ENCODE measurements at regions of chr14 and their contacts with region 1.

Region 1: DNA sequence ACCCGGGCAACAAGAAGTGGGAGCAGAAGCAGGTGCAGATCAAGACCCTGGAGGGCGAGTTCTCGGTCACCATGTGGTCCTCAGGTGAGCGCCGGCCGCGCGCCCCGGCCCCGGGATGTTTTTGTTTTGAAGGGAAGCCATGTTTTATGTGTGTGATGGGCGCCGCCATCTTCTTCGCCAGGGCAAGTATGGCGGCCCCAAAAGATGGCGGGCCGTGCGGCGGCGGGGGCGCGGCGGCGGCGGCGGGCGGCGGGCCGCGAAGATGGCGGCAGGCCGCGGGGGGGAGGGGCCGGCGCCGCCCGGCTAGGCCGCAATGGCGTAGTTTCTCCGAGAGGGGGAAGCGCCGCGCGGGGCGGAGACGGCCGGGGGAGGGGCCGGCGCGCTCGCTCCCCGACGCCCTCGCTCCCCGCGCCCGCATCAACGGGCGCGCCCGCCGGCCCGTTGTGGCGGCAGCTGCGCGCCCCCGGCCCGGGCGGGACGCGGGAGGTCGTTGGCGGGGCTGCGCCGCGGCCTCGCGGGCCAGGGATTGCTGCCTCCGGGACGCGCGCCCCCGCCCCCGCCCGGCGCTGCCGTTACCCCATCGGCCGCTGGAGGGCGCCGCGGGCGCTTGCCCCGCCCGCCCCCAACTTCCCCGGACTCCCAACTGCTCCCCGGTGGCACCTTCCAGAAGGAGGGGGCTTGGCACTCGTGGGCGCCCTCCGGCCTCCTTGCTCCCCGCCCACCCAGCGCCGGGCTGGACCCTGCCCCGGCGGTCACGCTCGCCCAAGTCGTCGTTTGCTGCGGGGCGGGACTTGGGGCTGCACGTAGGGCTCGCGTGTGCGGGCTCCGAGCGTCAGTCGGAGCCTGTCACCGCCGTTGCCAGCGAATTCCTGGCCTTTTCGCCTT is 1.1 kb downstream of the YY1 start:
- DNase-seq: peak; percentile 86
- ATAC-seq: peak; percentile 48
- H3K4me3 Mint-ChIP-seq: peak overlapping the region; percentile 87
- H3K27ac Mint-ChIP-seq: peak overlapping the region; percentile 90
- H3K4me1 Mint-ChIP-seq: peaks cover 61% of the 10 kb centered on the region
- H3K27me3 Mint-ChIP-seq: no peaks in the 10 kb centered on the region
- CTCF ChIP-seq: no peak

Region 2: DNA sequence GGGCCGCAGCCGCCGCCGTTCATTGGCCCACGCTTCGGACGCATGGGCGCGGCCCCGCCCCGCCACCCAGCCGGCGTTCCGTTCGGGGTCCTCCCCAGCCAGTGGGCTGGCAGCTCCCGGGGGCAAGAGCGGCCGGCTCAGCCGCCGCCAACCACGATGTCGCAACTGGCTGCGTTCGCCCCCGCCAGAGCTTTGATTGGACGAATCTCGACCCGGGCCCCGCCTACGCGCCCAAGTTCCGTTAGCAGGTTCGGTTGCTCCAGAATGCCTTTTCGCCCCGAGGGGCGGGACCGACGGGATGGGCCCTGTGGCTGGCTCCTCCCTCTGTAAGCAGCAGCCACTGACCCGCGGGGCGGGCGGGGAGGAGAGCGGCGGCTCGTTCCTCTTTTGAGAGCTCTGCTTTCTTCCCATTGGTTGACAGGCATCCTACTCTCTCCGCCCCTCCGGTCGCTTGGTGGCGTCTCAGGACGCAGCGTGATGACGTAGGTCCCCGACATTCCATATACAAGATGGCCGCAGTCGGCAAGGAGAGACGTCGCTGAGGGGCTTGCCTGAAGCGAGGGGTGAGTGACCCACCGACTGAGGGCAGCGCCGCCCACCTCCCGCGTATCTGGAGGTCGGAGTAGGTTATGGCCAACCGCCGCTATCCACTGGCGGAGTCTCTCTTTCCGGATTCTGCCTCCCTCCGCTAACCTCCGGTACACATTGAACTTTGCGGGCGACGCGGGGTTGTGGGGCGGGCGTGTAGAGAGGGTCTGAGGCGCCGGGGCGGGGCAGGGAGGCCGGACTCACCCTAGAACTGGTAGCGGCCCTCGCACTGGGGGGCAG is 759.0 kb before region 1 on chr14 and contains the start of gene CCNK:
- CTCF ChIA-PET with region 1: no interaction called
- POLR2A ChIA-PET with region 1: no interaction called
- intact Hi-C with region 1: loop called (anchors 2 kb)
- DNase-seq: peak; percentile 99
- ATAC-seq: peak; percentile 87
- H3K4me3 Mint-ChIP-seq: peak within 1 kb of the TSS; percentile 97
- H3K27ac Mint-ChIP-seq: peak within 1 kb of the TSS; percentile 96
- H3K4me1 Mint-ChIP-seq: peaks cover 59% of the 10 kb centered on the region
- H3K27me3 Mint-ChIP-seq: no peaks in the 10 kb centered on the region
- CTCF ChIP-seq: no peak
- total RNA-seq, gene CCNK: 76.7 and 79.2 TPM in 2 replicates

Region 3: DNA sequence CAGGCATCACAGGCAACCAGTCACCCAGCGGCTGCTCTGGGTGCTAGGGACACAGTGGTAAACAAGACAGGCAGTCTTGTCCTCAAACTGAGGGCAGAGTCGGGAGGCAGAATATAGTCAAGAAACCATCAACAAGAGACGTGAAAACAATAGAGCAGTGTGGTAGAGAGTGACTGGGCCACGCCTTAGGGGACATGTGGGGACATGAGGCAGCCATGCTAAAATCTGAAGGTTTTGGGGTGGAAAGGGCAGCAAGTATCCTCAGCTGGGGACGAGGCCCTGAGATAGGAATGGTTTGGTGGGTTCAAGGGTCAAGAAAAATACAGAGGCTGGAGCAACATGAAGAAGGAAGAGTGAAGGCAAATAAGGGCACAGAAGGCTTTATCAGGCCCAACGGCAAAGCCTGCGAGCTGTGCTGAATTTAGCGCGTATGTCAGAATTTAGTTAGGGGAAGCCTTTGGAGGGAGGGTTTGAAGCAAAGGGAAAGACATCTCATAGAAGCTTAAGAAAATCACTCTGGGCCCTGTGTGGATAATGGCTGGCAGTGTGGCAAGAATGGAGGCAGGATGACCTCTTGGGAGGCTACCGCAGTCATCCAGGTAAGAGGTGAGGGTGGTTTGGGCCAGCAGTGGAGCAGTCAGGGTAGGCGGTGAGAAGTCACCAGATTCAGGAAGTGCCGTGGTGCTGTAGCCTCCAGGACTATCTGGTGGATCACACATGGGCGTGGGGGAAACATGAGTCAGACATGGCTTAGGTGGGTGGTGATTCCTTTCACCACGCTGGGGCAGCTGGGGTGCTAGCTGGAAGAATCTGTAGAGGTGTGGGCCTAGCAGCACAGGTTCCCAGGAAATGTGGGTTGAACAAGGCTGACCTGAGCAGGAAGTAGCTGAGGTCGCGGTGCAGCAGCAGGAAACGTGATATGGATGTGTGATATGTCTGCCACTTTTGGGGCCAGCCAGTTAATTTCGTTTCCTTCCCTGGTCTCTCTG is 171.8 kb before region 1 on chr14:
- CTCF ChIA-PET with region 1: no interaction called
- POLR2A ChIA-PET with region 1: no interaction called
- intact Hi-C with region 1: loop called (anchors 1 kb)
- DNase-seq: peak; percentile 60
- ATAC-seq: peak; percentile 47
- H3K4me3 Mint-ChIP-seq: peak overlapping the region; percentile 94
- H3K27ac Mint-ChIP-seq: peak overlapping the region; percentile 98
- H3K4me1 Mint-ChIP-seq: peaks cover 95% of the 10 kb centered on the region
- H3K27me3 Mint-ChIP-seq: no peaks in the 10 kb centered on the region
- CTCF ChIP-seq: no peak

Region 4: GRCh38 chr14:100165376-100165775 is 74.7 kb before region 1 on chr14:
- CTCF ChIA-PET with region 1: no interaction called
- POLR2A ChIA-PET with region 1: no interaction called
- intact Hi-C with region 1: no loop called
- DNase-seq: no peak
- ATAC-seq: no peak
- H3K4me3 Mint-ChIP-seq: no peak overlapping the region
- H3K27ac Mint-ChIP-seq: peak overlapping the region; percentile 50
- H3K4me1 Mint-ChIP-seq: peaks cover 10% of the 10 kb centered on the region
- H3K27me3 Mint-ChIP-seq: no peaks in the 10 kb centered on the region
- CTCF ChIP-seq: no peak

Region 5: GRCh38 chr14:100213956-100214774 is 25.9 kb before region 1 on chr14:
- CTCF ChIA-PET with region 1: interaction called, 3 read pairs
- POLR2A ChIA-PET with region 1: interaction called, 17 read pairs
- intact Hi-C with region 1: loop called (anchors 1 kb)
- DNase-seq: peak; percentile 91
- ATAC-seq: peak; percentile 96
- H3K4me3 Mint-ChIP-seq: peak overlapping the region; percentile 85
- H3K27ac Mint-ChIP-seq: peak overlapping the region; percentile 80
- H3K4me1 Mint-ChIP-seq: peaks cover 17% of the 10 kb centered on the region
- H3K27me3 Mint-ChIP-seq: no peaks in the 10 kb centered on the region
- CTCF ChIP-seq: no peak

Region 6: GRCh38 chr14:100256339-100256895 is 16.3 kb after region 1 on chr14:
- CTCF ChIA-PET with region 1: interaction called, 4 read pairs
- POLR2A ChIA-PET with region 1: interaction called, 7 read pairs
- intact Hi-C with region 1: loop called (anchors 2 kb)
- DNase-seq: no peak
- ATAC-seq: peak; percentile 79
- H3K4me3 Mint-ChIP-seq: peak overlapping the region; percentile 3
- H3K27ac Mint-ChIP-seq: peak overlapping the region; percentile 70
- H3K4me1 Mint-ChIP-seq: peaks cover 80% of the 10 kb centered on the region
- H3K27me3 Mint-ChIP-seq: no peaks in the 10 kb centered on the region
- CTCF ChIP-seq: no peak

Region 7: DNA sequence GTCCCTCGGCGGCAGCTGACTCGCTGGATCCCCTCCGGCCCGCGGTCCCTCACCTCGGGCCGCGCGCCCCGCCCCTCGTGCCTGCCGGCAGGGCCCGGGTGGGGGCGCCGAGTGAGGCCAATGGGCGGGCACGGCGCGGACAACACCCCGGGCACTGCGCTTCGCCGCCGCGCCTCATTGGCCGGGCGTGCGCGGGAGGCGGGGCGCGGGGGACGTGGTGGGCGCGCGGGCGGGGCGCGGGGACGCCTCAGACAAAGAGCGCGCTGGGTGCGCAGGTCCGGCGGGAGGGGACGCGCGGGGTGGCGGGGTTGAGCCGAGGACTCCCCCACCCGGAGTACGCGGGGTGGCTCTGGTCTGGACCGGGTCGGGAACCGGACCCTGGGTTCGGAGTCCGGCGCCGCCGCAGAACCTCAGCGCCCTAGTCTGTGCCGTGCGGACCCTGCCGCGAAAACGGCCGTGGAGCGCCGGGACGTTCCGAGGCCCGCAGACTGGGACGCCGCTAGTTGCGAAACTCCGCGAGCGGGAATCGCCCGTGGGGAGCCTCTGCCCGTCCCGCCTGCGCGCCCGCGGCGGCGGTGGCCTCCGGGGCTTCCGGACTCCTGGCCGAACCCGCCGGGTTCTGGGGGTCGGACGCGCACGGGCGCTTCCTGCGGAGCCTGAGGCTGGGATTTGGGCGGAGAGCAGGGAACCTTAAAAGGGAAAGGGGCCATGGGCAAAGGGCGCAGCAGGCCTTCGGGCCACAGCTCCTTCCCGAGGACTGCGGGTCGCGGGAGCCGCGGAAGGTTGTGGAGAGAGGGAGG is 66.5 kb after region 1 on chr14 and contains the start of gene SLC25A29:
- CTCF ChIA-PET with region 1: no interaction called
- POLR2A ChIA-PET with region 1: interaction called, 11 read pairs
- intact Hi-C with region 1: loop called (anchors 2 kb)
- DNase-seq: peak; percentile 86
- ATAC-seq: peak; percentile 93
- H3K4me3 Mint-ChIP-seq: peak within 1 kb of the TSS; percentile 87
- H3K27ac Mint-ChIP-seq: peak within 1 kb of the TSS; percentile 66
- H3K4me1 Mint-ChIP-seq: peaks cover 21% of the 10 kb centered on the region
- H3K27me3 Mint-ChIP-seq: no peaks in the 10 kb centered on the region
- CTCF ChIP-seq: no peak
- total RNA-seq, gene SLC25A29: 20.6 and 28.8 TPM in 2 replicates

Region 8: DNA sequence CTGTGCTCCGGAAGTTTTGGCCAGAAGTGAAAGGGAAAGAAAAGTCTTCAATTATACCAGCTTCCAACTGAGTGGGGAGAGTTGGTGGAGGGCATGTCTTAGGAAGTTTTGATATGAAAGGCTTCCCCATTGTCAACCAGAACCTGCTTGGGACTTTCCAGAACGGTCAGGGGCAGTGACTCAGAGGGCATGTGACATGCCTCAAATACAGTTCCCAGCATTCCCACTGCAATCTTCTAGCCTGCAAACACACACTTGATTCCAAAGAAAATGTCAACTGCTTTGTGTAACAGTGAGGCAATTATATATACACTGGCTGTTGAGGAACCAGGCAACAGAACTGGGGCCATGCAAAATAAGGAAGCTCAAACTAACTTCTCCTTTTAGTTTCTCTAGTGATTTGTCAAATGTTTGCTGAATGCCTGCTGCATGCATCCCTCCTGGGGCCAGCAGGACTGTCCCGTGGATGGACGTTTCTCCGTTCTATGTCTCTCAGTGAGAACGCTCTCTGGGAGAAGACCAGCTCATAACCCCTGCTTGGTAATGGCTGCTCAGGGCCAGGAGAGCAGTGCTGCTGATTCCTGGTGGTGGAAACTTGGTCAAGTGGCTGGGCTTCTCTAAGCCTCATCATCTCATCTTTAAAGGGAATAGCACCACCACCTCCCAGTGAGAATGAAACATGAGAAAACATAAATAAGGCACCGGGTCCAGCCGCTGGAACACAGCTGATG is 101.4 kb after region 1 on chr14:
- CTCF ChIA-PET with region 1: interaction called, 4 read pairs
- POLR2A ChIA-PET with region 1: no interaction called
- intact Hi-C with region 1: loop called (anchors 1 kb)
- DNase-seq: no peak
- ATAC-seq: peak; percentile 93
- H3K4me3 Mint-ChIP-seq: peak overlapping the region; percentile 41
- H3K27ac Mint-ChIP-seq: peak overlapping the region; percentile 92
- H3K4me1 Mint-ChIP-seq: peaks cover 32% of the 10 kb centered on the region
- H3K27me3 Mint-ChIP-seq: no peaks in the 10 kb centered on the region
- CTCF ChIP-seq: no peak

Measured in activated B cell treated with CpG ODN at 0.5 μM for 24 hours (primary cell).